ENCODE measurements at regions of chr6 and their contacts with region 1.

Region 1: DNA sequence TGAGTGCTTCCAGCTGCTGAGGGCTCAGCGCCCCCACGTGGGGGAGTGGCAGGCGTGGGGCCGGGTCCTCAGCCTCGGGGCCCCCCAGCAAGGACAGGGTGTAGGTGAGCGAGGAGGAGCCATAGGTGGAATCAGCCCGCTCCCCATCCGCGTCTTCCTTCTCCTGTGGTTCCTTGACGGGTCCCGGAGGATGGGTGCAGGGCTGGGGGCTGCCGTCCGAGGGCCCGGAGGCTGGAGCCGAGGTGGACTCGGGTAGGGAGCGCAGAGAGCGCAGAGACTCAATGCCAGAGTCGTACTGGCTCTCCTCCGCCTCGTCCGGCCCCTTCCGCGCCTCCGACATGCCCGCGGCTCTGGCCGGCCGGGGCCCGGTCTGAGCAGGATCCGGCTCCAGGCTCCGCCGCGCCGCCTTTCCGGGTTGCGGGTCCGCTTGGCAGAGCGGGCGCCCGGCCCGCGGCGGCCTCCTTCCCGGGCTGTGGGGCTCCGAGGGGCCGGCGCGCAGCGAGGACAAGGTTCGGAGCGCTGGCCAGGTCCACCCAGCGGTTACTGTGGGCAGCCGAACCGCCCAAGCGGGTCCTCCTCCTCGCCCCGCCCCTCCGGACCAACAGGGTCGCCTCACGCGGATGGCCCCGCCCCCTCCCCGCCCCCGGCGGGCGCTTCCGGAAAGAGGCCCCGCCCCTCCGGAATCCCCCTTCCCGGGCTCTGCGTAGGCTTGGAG is at the start of gene NFKBIE:
- DNase-seq: peak; percentile 98
- H3K4me3 ChIP-seq: peak within 1 kb of the TSS; percentile 74 to 89
- H3K27ac ChIP-seq: peak within 1 kb of the TSS; percentile 56 to 62
- H3K4me1 ChIP-seq: peaks cover 16 to 35% of the 10 kb centered on the region in 2 experiments; a peak in 2 of 4 replicates
- H3K27me3 ChIP-seq: peaks cover 20% of the 10 kb centered on the region
- CTCF ChIP-seq: peak; percentile 53
- EP300 ChIP-seq: no peak
- RAD21 ChIP-seq: peak; percentile 52
- polyA plus RNA-seq, gene NFKBIE: 5.8 and 6.4 TPM in 2 replicates

Region 2: GRCh38 chr6:44246663-44247337 is 18.4 kb before region 1 on chr6 and contains the start of gene HSP90AB1:
- CTCF ChIA-PET with region 1: interaction called, 27 read pairs
- POLR2A ChIA-PET with region 1: interaction called, 9 read pairs
- DNase-seq: peak; percentile 94
- H3K4me3 ChIP-seq: peak within 1 kb of the TSS; percentile 65 to 99
- H3K27ac ChIP-seq: peak within 1 kb of the TSS; percentile 86
- H3K4me1 ChIP-seq: peaks cover 13 to 24% of the 10 kb centered on the region in 2 experiments; a peak in 3 of 4 replicates
- H3K27me3 ChIP-seq: no peaks in the 10 kb centered on the region
- CTCF ChIP-seq: no peak
- EP300 ChIP-seq: peak in 1 of 2 experiments; percentile 50; a peak in 1 of 4 replicates
- RAD21 ChIP-seq: no peak
- polyA plus RNA-seq, gene HSP90AB1: 843 and 1,069 TPM in 2 replicates

Region 3: GRCh38 chr6:44278774-44279697 is 13.9 kb after region 1 on chr6:
- CTCF ChIA-PET with region 1: interaction called, 11 read pairs
- POLR2A ChIA-PET with region 1: no interaction called
- DNase-seq: no peak
- H3K4me3 ChIP-seq: no peak overlapping the region
- H3K27ac ChIP-seq: no peak overlapping the region
- H3K4me1 ChIP-seq: no peaks in the 10 kb centered on the region
- H3K27me3 ChIP-seq: no peaks in the 10 kb centered on the region
- CTCF ChIP-seq: no peak
- EP300 ChIP-seq: no peak
- RAD21 ChIP-seq: no peak

Region 4: DNA sequence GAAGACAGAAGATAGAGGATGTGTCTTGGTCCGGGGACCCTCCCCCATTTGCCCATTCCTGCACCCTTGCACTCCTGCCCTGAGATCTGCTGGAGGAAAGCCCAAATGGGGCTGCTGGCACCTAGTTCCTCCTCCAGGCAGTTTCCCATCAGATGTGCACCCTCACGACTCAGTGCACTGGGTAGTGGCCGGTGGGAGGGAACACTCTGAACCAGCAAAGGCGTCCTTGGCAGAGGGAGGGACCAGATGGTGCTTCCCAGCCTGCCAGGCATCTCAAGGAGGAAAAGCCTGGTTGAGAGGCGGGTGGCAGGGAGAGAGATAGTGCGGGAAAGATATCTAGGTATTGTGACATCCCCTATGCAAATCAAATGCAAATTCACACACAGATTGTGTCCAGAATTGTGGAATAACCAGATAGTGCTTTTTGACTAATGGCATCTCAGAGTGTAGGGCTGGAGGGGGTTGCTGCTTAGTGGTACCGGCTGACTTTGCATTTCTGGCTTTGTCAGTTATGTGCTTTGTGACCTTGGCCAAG is 24.6 kb after region 1 on chr6:
- CTCF ChIA-PET with region 1: interaction called, 238 read pairs
- POLR2A ChIA-PET with region 1: no interaction called
- DNase-seq: peak; percentile 52
- H3K4me3 ChIP-seq: no peak overlapping the region
- H3K27ac ChIP-seq: no peak overlapping the region
- H3K4me1 ChIP-seq: peaks cover 0 to 8% of the 10 kb centered on the region in 2 experiments; a peak in 1 of 4 replicates
- H3K27me3 ChIP-seq: peaks cover 10% of the 10 kb centered on the region
- CTCF ChIP-seq: no peak
- EP300 ChIP-seq: no peak
- RAD21 ChIP-seq: no peak

Region 5: GRCh38 chr6:44304282-44305199 is 39.4 kb after region 1 on chr6:
- CTCF ChIA-PET with region 1: interaction called, 238 read pairs
- POLR2A ChIA-PET with region 1: interaction called, 6 read pairs
- DNase-seq: peak; percentile 84
- H3K4me3 ChIP-seq: no peak overlapping the region
- H3K27ac ChIP-seq: no peak overlapping the region; a peak in 1 of 4 replicates
- H3K4me1 ChIP-seq: no peaks in the 10 kb centered on the region
- H3K27me3 ChIP-seq: no peaks in the 10 kb centered on the region
- CTCF ChIP-seq: peak; percentile 76
- EP300 ChIP-seq: no peak
- RAD21 ChIP-seq: peak; percentile 54

Region 6: DNA sequence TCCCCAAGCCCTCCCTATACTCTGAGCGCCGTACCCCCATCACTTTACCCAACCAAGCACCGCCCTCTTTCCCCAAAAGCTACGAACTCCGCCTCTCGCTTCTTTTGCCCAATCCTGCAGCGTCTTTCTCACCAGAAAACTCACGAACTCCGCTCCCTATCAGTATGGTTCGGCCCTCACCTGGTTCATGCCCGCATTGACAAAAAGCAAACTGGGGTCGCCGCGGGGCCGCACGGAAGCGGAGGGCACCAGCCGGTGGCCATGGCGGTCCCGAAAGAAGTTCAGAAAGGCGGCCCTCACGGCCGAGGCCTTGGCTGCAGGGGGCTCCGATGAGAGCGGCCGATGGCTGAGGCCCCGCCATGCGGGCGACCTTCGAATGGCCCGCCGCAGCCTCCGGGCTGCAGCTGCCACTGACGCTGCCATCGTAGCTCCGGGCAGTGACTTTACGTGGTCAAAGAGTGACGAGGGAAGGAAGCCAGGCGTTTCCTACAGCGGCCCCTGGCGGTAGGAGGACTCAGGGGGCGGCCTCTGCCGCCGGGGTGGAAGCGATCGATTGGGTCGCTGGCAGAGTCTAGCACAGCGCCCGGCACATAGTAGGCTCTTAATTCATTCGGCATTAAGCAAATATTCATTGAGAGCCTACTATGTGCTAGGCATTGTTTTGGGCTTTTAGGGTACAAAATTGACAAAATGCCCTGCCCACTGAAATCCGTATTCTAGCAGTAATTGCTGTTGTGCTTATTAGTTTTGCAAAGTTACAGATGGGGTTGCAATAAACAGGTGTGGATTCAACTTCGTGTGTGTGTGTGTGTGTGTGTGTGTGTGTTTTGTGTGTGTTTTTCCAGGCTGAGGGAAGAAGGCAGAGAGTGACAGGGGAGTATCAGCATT is 48.0 kb after region 1 on chr6 and contains the start of gene AARS2:
- CTCF ChIA-PET with region 1: interaction called, 238 read pairs
- POLR2A ChIA-PET with region 1: no interaction called
- DNase-seq: peak; percentile 92
- H3K4me3 ChIP-seq: peak within 1 kb of the TSS; percentile 90 to 96
- H3K27ac ChIP-seq: peak within 1 kb of the TSS; percentile 24 to 85; a peak in 3 of 4 replicates
- H3K4me1 ChIP-seq: peaks cover 4 to 8% of the 10 kb centered on the region in 2 experiments; a peak in 3 of 4 replicates
- H3K27me3 ChIP-seq: no peaks in the 10 kb centered on the region
- CTCF ChIP-seq: peak; percentile 95
- EP300 ChIP-seq: peak in 1 of 2 experiments; percentile 15; a peak in 1 of 4 replicates
- RAD21 ChIP-seq: no peak
- polyA plus RNA-seq, gene AARS2: 9.0 and 9.5 TPM in 2 replicates

Region 7: DNA sequence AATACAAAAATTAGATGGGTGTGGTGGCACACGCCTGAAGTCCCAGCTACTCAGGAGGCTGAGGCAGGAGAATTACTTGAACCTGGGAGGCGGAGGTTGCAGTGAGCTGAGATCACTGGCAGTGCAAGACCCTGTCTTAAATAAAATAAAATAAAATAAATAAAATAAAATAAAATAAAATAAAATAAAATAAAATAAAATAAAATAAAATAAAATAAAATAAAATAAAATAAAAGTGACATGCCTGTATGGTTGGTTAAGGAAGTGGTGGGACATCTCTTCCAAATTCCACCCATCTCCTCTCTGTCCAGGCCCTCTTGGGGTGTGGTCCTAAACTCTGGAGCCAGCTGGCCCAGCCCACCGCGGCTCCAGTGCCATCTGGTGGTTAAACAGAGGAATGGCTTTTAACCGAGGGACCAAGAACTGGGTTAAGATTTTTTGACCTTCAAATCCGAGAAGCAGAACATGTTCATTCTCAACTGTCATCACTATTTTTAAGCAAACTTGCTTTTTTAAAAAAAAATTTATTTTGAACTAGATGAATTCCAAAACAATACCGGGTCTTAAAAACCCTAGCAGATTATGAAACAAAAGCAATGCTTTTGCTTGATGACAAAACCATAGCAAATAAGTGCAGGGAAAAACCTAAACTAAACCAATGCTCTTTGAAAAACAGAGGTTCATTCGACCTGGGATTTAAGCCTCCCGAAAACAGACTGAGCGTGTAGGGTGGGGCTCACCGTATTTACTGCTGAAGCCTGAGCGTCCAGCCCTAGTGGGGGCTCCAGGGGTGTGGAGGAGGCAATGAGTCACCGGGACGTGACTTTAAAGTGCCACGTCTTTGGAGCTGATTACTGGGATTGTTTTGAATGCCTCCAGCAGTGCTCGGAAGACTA is 191.2 kb after region 1 on chr6:
- CTCF ChIA-PET with region 1: interaction called, 17 read pairs
- POLR2A ChIA-PET with region 1: no interaction called
- DNase-seq: peak; percentile 79
- H3K4me3 ChIP-seq: peak overlapping the region in 1 of 2 experiments; percentile 51; a peak in 1 of 4 replicates
- H3K27ac ChIP-seq: no peak overlapping the region
- H3K4me1 ChIP-seq: peaks cover 0 to 4% of the 10 kb centered on the region in 2 experiments; a peak in 2 of 4 replicates
- H3K27me3 ChIP-seq: no peaks in the 10 kb centered on the region
- CTCF ChIP-seq: peak; percentile 86
- EP300 ChIP-seq: no peak
- RAD21 ChIP-seq: peak; percentile 80

Measured in SK-N-SH (cell line).